PC-3 (cell line): ENCODE measurements at regions of chr4 and their contacts with region 1.

Region 1: GRCh38 chr4:53943345-53944085 is 120.9 kb downstream of the CHIC2 start:
- DNase-seq: peak; percentile 97
- ATAC-seq: peak; percentile 94
- H3K4me3 ChIP-seq: peak overlapping the region; percentile 33; the same call in 1 of the 2 replicates
- H3K27ac ChIP-seq: peak overlapping the region; percentile 85
- H3K4me1 ChIP-seq: peaks cover 22% of the 10 kb centered on the region
- H3K27me3 ChIP-seq: no peaks in the 10 kb centered on the region
- CTCF ChIP-seq: no peak

Region 2: GRCh38 chr4:53914313-53915016 is 29.1 kb before region 1 on chr4:
- CTCF ChIA-PET with region 1: interaction called, 15 read pairs
- POLR2A ChIA-PET with region 1: no interaction called
- intact Hi-C with region 1: no loop called
- DNase-seq: peak; percentile 99
- ATAC-seq: peak; percentile 87
- H3K4me3 ChIP-seq: peak overlapping the region; percentile 4; the same call in 1 of the 2 replicates
- H3K27ac ChIP-seq: peak overlapping the region; percentile 88
- H3K4me1 ChIP-seq: peaks cover 50% of the 10 kb centered on the region
- H3K27me3 ChIP-seq: no peaks in the 10 kb centered on the region
- CTCF ChIP-seq: no peak

Region 3: GRCh38 chr4:53921856-53922255 is 21.7 kb before region 1 on chr4:
- CTCF ChIA-PET with region 1: no interaction called
- POLR2A ChIA-PET with region 1: no interaction called
- intact Hi-C with region 1: loop called (anchors 1 kb)
- DNase-seq: no peak
- ATAC-seq: no peak
- H3K4me3 ChIP-seq: no peak overlapping the region
- H3K27ac ChIP-seq: peak overlapping the region; percentile 48
- H3K4me1 ChIP-seq: peaks cover 52% of the 10 kb centered on the region
- H3K27me3 ChIP-seq: no peaks in the 10 kb centered on the region
- CTCF ChIP-seq: no peak

Region 4: DNA sequence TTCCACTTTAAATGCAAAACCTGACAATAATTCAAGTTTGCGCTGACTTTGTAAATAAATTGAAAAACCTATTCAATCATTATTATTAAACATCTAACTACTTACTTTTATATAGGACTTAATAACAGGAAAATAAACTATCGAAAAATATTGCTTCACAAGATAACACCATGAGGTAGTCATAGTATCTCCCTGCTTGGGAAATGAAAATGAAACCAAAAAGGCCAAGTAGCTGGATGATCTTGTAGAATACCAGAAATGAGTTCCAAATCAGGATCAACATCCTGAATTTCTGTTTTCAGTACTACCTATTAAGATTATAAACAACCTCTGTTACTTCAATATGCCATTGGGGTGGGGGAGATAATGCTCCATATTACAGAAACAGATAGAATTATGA is 62.0 kb after region 1 on chr4:
- CTCF ChIA-PET with region 1: no interaction called
- POLR2A ChIA-PET with region 1: no interaction called
- intact Hi-C with region 1: loop called (anchors 5 kb)
- DNase-seq: no peak
- ATAC-seq: no peak
- H3K4me3 ChIP-seq: no peak overlapping the region
- H3K27ac ChIP-seq: no peak overlapping the region
- H3K4me1 ChIP-seq: peaks cover 7% of the 10 kb centered on the region; the same call in 1 of the 2 replicates
- H3K27me3 ChIP-seq: no peaks in the 10 kb centered on the region
- CTCF ChIP-seq: no peak

Region 5: DNA sequence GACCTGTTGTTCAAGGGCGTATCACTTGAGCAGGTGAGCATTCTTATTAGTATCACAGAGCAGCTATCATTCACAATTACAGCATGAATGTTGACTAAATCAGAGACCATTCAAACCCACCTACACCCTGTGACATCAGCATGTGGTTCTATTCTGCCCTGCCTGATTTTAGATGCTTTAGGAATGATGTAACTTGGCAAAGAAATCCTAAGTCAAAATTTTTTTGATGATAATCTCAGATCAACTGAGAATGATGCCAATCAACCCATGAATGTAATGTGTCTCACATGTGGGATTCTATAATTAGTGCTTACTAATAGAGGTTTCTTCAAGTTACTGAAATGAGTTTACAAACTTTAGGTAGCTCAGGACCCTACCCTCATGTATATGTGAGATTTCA is 134.3 kb after region 1 on chr4:
- CTCF ChIA-PET with region 1: no interaction called
- POLR2A ChIA-PET with region 1: no interaction called
- intact Hi-C with region 1: no loop called
- DNase-seq: peak; percentile 70
- ATAC-seq: no peak
- H3K4me3 ChIP-seq: no peak overlapping the region
- H3K27ac ChIP-seq: no peak overlapping the region
- H3K4me1 ChIP-seq: peaks cover 36% of the 10 kb centered on the region
- H3K27me3 ChIP-seq: no peaks in the 10 kb centered on the region
- CTCF ChIP-seq: no peak